ENCODE measurements at regions of chrX and their contacts with region 1.

Region 1: GRCh38 chrX:40591126-40591525 is 10.4 kb downstream of the ATP6AP2 start:
- DNase-seq: no peak
- H3K4me3 ChIP-seq: no peak overlapping the region
- H3K4me3 Mint-ChIP-seq: no peak overlapping the region
- H3K27ac ChIP-seq: no peak overlapping the region
- H3K27ac Mint-ChIP-seq: peak overlapping the region in 1 of 7 donors; percentile 53
- H3K4me1 ChIP-seq: peaks cover 21% of the 10 kb centered on the region
- H3K4me1 Mint-ChIP-seq: peaks cover 11 to 36% (median 23%) of the 10 kb centered on the region in 4 donors
- H3K27me3 ChIP-seq: no peaks in the 10 kb centered on the region
- H3K27me3 Mint-ChIP-seq: no peaks in the 10 kb centered on the region

Region 2: DNA sequence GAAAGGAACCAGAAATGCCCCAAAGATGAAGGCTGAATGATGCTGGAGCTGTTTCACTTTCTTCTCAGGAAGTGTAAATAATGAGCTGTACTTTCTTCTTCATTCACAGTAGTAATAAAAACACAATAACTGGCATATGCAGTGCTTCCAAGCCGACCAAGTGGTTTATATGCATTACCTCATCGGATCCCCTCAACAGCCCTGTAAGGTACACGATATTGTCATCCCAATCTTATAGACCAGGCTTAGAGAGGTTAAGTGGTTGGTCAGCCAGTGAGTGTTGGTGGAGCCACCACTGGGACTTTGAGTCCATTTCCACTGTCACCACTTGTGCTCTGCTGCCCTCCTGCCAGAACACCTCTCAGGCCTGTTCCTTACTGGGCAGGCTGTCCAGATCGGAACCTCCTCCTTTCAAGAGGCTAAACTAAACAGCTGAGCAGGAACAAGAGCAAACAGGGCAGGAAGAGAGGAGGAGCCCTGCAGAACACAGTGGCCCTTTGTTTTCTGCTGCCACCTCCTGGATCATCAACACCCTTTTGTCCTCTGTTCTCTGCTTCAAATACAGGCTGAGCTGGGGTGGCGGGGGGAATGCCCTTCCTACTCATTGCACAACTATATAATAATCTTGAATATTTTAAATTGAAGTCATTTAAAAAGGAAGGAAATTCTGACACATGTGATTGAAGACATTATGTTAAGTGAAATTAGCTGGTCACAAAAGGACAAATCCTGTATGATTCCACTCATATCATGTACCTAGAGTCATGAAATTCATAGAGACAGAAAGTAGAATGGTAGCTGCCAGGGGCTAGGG is 122.9 kb before region 1 on chrX:
- CTCF ChIA-PET with region 1: no interaction called
- POLR2A ChIA-PET with region 1: no interaction called
- intact Hi-C with region 1: no loop called
- DNase-seq: peak in 4 of 5 donors; percentile 21 to 37 (median 23)
- H3K4me3 ChIP-seq: no peak overlapping the region
- H3K4me3 Mint-ChIP-seq: peak overlapping the region in 2 of 8 donors; percentile 15 to 45
- H3K27ac ChIP-seq: no peak overlapping the region
- H3K27ac Mint-ChIP-seq: peak overlapping the region in 2 of 7 donors; percentile 25 to 65
- H3K4me1 ChIP-seq: peaks cover 26% of the 10 kb centered on the region
- H3K4me1 Mint-ChIP-seq: peaks cover 16 to 34% (median 24%) of the 10 kb centered on the region in 4 donors
- H3K27me3 ChIP-seq: no peaks in the 10 kb centered on the region
- H3K27me3 Mint-ChIP-seq: peaks cover 0 to 2% of the 10 kb centered on the region in 2 donors

Region 3: DNA sequence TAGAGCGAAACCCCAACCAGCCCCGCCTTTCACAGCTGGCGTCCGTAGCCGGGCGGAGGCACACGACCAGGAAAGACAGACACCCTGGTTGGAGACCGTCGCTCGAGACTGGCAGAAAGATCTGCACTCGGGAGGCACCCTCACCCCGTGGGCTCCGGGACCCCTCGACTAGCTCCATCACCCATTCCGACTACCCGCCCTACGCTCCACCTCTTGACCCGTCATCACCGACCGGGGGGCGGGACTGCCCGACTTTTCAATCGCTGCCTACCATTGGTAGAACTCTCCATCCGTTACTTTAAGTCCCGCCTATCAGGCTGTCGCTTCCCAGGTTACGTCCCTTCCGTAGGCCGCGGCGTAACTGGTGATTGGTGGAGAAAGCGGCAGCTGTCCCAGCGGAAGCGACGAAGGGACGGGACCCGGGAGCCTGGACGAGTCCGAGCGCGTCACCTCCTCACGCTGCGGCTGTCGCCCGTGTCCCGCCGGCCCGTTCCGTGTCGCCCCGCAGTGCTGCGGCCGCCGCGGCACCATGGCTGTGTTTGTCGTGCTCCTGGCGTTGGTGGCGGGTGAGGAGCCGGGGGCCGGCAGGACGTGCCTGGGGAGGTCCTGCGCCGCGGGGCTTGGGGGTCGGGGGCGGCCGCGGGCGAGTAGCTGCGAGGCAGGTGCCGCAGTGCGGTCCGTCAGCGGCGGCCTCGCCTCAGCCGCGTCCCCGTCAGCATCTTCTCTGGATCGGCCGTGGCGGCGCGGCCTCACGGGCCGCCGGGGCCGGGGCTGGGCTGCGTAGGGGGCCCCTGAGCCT is 10.4 kb before region 1 on chrX and contains the start of gene ATP6AP2:
- CTCF ChIA-PET with region 1: no interaction called
- POLR2A ChIA-PET with region 1: interaction called, 12 read pairs
- intact Hi-C with region 1: no loop called
- DNase-seq: peak; percentile 85 to 93 (median 90)
- H3K4me3 ChIP-seq: peak within 1 kb of the TSS; percentile 61 to 82
- H3K4me3 Mint-ChIP-seq: peak within 1 kb of the TSS; percentile 90 to 95 (median 92)
- H3K27ac ChIP-seq: peak within 1 kb of the TSS; percentile 84
- H3K27ac Mint-ChIP-seq: peak within 1 kb of the TSS; percentile 85 to 98 (median 96)
- H3K4me1 ChIP-seq: peaks cover 21% of the 10 kb centered on the region
- H3K4me1 Mint-ChIP-seq: peaks cover 15 to 35% (median 26%) of the 10 kb centered on the region in 4 donors
- H3K27me3 ChIP-seq: no peaks in the 10 kb centered on the region
- H3K27me3 Mint-ChIP-seq: no peaks in the 10 kb centered on the region
- total RNA-seq, gene ATP6AP2: 80.9 to 86.5 TPM

Measured in CD4-positive, alpha-beta memory T cell (primary cell).